HEK293T (cell line): ENCODE measurements at regions of chr3 and their contacts with region 1.

Region 1: GRCh38 chr3:49802719-49803464 is at the start of gene INKA1:
- DNase-seq: peak; percentile 88

Region 2: DNA sequence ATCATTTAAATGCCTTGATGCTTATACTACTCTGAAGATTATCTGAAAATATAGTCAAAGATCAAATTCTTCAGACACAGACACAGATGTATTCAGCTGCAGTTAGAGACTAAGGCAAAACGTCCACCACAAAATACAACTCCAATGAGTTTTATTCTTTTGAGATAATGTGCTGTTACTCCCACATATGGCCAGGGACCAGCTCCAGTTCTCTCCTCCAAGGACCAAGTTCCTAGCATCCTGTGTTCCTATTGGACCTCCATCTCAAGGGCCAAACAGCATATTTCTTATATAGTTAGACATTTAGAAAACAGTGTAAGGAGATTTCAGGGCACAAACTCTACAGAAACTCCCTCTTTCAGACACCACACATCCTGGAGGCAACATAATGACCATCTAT is 43.7 kb before region 1 on chr3:
- CTCF ChIA-PET with region 1: no interaction called
- POLR2A ChIA-PET with region 1: no interaction called
- DNase-seq: no peak

Region 3: DNA sequence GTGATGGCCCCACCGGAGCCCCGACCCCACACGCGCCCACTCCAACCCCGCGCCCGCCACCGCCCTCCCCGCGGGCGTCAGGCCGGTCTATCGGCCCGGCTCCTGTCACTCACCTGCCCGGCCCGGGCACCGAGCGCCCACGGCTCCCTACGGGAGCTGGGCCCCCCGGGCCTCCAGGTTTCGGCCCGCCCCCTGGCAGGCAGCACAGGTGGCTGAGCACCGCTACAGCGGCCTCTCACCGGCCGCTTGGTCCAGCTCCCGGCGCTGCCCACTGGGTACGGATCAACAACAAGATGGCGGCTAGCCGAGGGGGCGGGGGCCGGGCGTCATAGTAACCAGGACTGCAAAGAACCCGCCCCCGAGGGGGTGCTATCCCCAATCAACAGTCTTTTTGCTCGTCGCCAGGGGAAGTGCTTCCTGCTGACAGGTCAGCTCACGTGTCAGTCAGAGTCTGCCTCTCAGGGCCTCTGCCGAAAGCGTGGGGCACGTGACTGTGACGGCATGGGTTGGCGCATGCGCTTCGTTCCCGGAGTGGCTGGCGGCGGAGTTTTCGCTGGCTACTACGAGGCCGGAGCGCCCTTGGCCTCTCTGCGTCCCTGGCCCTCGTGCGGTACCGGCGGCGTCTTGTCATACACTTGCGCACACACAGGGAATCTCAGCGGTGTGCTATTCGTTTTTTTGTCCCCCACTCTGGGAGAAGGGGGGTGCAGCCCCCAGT is 16.5 kb before region 1 on chr3 and contains the start of gene IP6K1:
- CTCF ChIA-PET with region 1: interaction called, 3 read pairs
- POLR2A ChIA-PET with region 1: interaction called, 18 read pairs
- DNase-seq: peak; percentile 100

Region 4: GRCh38 chr3:49839193-49839809 is 36.4 kb after region 1 on chr3:
- CTCF ChIA-PET with region 1: interaction called, 18 read pairs
- POLR2A ChIA-PET with region 1: interaction called, 6 read pairs
- DNase-seq: peak; percentile 79

Region 5: GRCh38 chr3:49912881-49913281 is 110.0 kb after region 1 on chr3:
- CTCF ChIA-PET with region 1: no interaction called
- POLR2A ChIA-PET with region 1: no interaction called
- DNase-seq: no peak